Right cardiac atrium (tissue), 5 donors: ENCODE measurements at regions of chr11 and their contacts with region 1.

Region 1: GRCh38 chr11:103202048-103202651 is 92.9 kb downstream of the DYNC2H1 start:
- DNase-seq: no peak
- ATAC-seq: no peak
- H3K4me3 ChIP-seq: no peak overlapping the region
- H3K27ac ChIP-seq: no peak overlapping the region
- H3K4me1 ChIP-seq: no peaks in the 10 kb centered on the region
- H3K27me3 ChIP-seq: no peaks in the 10 kb centered on the region

Region 2: DNA sequence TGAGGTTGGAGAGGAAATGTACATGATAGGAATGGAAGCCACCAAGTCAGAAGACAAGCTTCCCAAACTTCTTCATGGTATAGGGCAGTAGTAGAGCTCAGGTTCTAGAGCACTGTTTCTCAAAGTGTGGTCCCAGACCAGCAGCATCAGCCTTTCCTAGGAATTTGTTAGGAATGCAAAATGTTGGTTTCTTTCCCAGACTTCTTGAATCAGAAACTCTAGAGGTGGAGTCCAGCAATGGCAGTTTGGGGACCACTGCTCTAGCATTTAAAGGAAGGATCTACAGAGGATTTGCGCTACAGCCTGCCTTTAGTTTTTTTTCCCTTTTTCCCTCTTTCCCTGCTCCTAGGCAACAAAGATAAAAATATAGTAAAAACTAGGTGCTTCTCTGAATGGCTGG is 310.4 kb before region 1 on chr11:
- intact Hi-C with region 1: no loop called
- DNase-seq: no peak
- ATAC-seq: no peak
- H3K4me3 ChIP-seq: no peak overlapping the region
- H3K27ac ChIP-seq: no peak overlapping the region
- H3K4me1 ChIP-seq: no peaks in the 10 kb centered on the region
- H3K27me3 ChIP-seq: no peaks in the 10 kb centered on the region

Region 3: GRCh38 chr11:103043826-103044624 is 158.1 kb before region 1 on chr11:
- intact Hi-C with region 1: no loop called
- DNase-seq: no peak
- ATAC-seq: no peak
- H3K4me3 ChIP-seq: no peak overlapping the region
- H3K27ac ChIP-seq: no peak overlapping the region
- H3K4me1 ChIP-seq: no peaks in the 10 kb centered on the region
- H3K27me3 ChIP-seq: no peaks in the 10 kb centered on the region

Region 4: DNA sequence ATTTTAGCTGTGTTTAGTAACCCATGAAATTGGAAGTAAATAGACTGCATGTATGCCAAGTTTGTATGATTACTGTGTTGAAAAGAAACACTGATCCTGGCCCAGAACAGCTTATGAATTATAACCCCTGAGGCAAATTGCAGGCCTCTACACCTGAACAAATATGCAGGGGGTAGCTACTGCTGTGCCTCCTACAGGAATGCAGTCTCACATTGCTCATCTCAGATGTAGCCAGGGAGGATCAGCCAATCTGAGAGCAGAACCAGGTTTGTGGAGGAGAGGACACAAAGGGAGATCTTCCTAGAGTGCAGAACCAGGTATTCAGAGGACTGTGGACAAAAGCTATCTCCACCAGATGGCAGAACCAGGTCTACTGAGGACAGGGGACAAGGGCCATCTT is 392.1 kb after region 1 on chr11:
- intact Hi-C with region 1: loop called in 1 of 4 experiments (anchors 5 kb)
- DNase-seq: no peak
- ATAC-seq: no peak
- H3K4me3 ChIP-seq: no peak overlapping the region
- H3K27ac ChIP-seq: no peak overlapping the region
- H3K4me1 ChIP-seq: no peaks in the 10 kb centered on the region
- H3K27me3 ChIP-seq: no peaks in the 10 kb centered on the region